ENCODE measurements at regions of chr21 and their contacts with region 1.

Region 1: DNA sequence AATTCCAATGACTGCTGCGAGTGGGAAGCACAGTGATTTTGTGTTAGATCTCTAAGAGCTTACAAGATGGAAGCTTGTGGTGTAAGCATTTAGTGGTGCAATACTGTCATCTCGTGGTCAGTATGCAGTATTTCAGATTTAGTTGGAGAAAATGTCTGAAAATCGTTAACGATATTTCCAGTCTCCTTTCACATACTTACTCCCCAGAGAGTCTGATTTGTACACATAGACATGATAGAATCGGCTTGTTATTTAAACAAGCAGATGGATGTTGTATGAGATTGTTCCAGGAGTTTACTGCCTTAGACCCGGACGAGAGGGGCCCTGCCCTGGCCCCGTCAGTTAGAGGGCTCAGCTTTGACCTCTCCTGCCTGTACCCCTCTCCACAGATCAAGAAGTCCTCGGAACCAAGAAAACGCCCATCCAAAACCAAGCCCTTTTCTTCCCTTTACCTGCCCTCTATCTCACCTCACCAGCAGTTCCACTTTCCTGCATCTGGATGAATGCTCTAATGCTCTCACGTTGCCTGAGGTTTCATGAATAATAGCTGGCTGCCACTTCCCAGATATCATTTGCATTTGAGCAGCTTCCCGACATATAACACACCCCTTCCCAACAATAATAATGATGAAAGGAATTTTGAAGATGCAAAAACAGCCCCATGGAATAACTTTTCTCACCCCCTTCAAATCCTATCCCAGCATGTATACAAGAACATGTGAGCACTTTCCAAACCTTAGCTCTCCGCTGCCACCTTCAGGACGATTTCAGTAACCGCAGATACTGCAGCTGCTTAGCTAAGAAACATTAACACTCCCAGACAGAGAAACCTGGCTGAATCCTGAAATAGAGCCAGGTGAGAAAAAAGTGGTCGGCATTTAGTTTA is 247.3 kb downstream of the LTN1 start:
- DNase-seq: peak; percentile 87
- H3K4me3 ChIP-seq: peak overlapping the region; percentile 46
- H3K27ac ChIP-seq: no peak overlapping the region
- H3K27me3 ChIP-seq: no peaks in the 10 kb centered on the region
- CTCF ChIP-seq: peak; percentile 96

Region 2: GRCh38 chr21:26850108-26850643 is 1895.2 kb before region 1 on chr21:
- CTCF ChIA-PET with region 1: interaction called, 38 read pairs
- POLR2A ChIA-PET with region 1: no interaction called
- DNase-seq: no peak
- H3K4me3 ChIP-seq: no peak overlapping the region
- H3K27ac ChIP-seq: no peak overlapping the region
- H3K27me3 ChIP-seq: no peaks in the 10 kb centered on the region
- CTCF ChIP-seq: peak; percentile 58

Region 3: GRCh38 chr21:28336314-28336713 is 409.1 kb before region 1 on chr21:
- CTCF ChIA-PET with region 1: interaction called, 89 read pairs
- POLR2A ChIA-PET with region 1: interaction called, 6 read pairs
- DNase-seq: peak; percentile 93
- H3K4me3 ChIP-seq: no peak overlapping the region
- H3K27ac ChIP-seq: no peak overlapping the region
- H3K27me3 ChIP-seq: no peaks in the 10 kb centered on the region
- CTCF ChIP-seq: peak; percentile 63

Region 4: GRCh38 chr21:28516991-28517592 is 228.3 kb before region 1 on chr21:
- CTCF ChIA-PET with region 1: interaction called, 12 read pairs
- POLR2A ChIA-PET with region 1: no interaction called
- DNase-seq: no peak
- H3K4me3 ChIP-seq: no peak overlapping the region
- H3K27ac ChIP-seq: no peak overlapping the region
- H3K27me3 ChIP-seq: no peaks in the 10 kb centered on the region
- CTCF ChIP-seq: peak; percentile 38

Region 5: DNA sequence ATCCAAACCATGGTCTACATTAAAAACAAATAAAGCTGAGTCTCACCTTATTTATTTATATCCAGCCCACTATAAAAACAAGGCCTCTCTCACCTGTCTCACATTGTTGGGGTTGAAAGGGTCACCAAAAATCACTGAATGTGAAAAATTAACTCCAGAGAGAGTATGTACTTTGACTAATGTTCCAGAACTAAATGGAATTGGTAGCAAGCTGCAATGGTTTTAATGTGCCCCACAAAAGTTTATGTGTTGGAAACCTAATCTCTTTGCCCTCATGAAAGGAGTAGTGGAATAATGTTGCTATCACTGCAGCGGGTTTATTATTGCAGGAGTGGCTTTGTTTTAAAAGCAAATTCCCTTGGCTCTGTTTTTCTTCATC is 17.0 kb after region 1 on chr21:
- CTCF ChIA-PET with region 1: interaction called, 10 read pairs
- POLR2A ChIA-PET with region 1: no interaction called
- DNase-seq: no peak
- H3K4me3 ChIP-seq: no peak overlapping the region
- H3K27ac ChIP-seq: no peak overlapping the region
- H3K27me3 ChIP-seq: no peaks in the 10 kb centered on the region
- CTCF ChIP-seq: no peak

Region 6: GRCh38 chr21:28793043-28793442 is 47.7 kb after region 1 on chr21:
- CTCF ChIA-PET with region 1: interaction called, 21 read pairs
- POLR2A ChIA-PET with region 1: no interaction called
- DNase-seq: no peak
- H3K4me3 ChIP-seq: no peak overlapping the region
- H3K27ac ChIP-seq: no peak overlapping the region
- H3K27me3 ChIP-seq: no peaks in the 10 kb centered on the region
- CTCF ChIP-seq: peak; percentile 72

Region 7: DNA sequence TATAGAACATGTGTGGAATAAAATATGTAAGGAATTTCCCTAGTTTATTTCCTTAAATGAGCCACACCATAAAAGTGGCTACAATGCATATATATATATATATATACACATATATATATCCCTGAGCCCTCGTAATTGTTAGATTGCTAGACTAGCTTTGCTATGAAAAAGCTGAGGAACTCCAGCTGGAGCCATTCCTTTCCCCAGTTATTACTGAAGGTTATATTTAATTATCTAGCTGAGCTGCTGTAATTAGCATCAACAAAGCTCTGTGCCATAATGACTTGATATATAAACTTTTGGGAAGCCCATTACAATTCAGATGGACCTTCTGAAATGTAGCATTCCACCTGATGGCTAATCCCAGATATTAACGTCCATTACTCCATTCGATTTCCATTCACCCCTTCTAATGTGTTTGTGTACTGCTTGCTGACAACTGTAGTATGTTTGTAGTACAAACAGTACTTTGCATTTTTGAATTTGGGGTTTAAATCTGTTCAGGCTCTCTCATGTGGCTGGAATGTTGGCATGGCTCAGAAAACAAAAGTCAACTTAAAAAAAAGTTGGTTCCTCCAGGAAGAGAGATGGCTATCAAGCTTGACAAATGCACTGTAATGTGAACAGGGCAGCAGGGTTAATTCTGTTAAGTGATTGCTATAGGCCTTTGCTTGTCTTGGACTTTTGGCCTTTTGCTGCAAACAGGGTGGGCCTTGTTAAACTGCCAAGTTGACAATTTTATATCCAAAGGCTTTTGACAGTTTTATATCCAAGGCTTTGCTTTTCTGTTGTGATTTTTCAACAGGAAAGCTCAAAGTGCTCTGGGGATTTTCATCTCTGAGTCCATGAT is 77.3 kb after region 1 on chr21:
- CTCF ChIA-PET with region 1: no interaction called
- POLR2A ChIA-PET with region 1: no interaction called
- DNase-seq: no peak
- H3K4me3 ChIP-seq: no peak overlapping the region
- H3K27ac ChIP-seq: no peak overlapping the region
- H3K27me3 ChIP-seq: no peaks in the 10 kb centered on the region
- CTCF ChIP-seq: no peak